Activated CD8-positive, alpha-beta T cell treated with anti-CD3 and anti-CD28 coated beads for 36 hours (primary cell): ENCODE measurements at regions of chr6 and their contacts with region 1.

Region 1: GRCh38 chr6:149717588-149718458 is at the start of gene LATS1:
- DNase-seq: peak; percentile 95
- ATAC-seq: peak; percentile 96
- H3K4me3 Mint-ChIP-seq: peak within 1 kb of the TSS; percentile 92
- H3K27ac Mint-ChIP-seq: peak within 1 kb of the TSS; percentile 94
- H3K4me1 Mint-ChIP-seq: peaks cover 24% of the 10 kb centered on the region
- H3K27me3 Mint-ChIP-seq: no peaks in the 10 kb centered on the region
- CTCF ChIP-seq: no peak
- total RNA-seq, gene LATS1: 21.1 to 21.2 TPM

Region 2: GRCh38 chr6:149701714-149702113 is 16.1 kb before region 1 on chr6:
- CTCF ChIA-PET with region 1: interaction called, 4 read pairs
- POLR2A ChIA-PET with region 1: interaction called, 20 read pairs
- intact Hi-C with region 1: no loop called
- DNase-seq: no peak
- ATAC-seq: no peak
- H3K4me3 Mint-ChIP-seq: no peak overlapping the region
- H3K27ac Mint-ChIP-seq: no peak overlapping the region
- H3K4me1 Mint-ChIP-seq: peaks cover 41% of the 10 kb centered on the region
- H3K27me3 Mint-ChIP-seq: no peaks in the 10 kb centered on the region
- CTCF ChIP-seq: no peak

Region 3: GRCh38 chr6:149746147-149746946 is 28.5 kb after region 1 on chr6 and contains the start of gene NUP43:
- CTCF ChIA-PET with region 1: interaction called, 17 read pairs
- POLR2A ChIA-PET with region 1: interaction called, 45 read pairs
- intact Hi-C with region 1: no loop called
- DNase-seq: peak; percentile 99
- ATAC-seq: peak; percentile 74
- H3K4me3 Mint-ChIP-seq: peak within 1 kb of the TSS; percentile 98
- H3K27ac Mint-ChIP-seq: peak within 1 kb of the TSS; percentile 90
- H3K4me1 Mint-ChIP-seq: peaks cover 27% of the 10 kb centered on the region
- H3K27me3 Mint-ChIP-seq: no peaks in the 10 kb centered on the region
- CTCF ChIP-seq: peak; percentile 84
- total RNA-seq, gene NUP43: 75.7 to 75.8 TPM